Activated CD4-positive, alpha-beta T cell treated with anti-CD3 and anti-CD28 coated beads, Interleukin-2, amount 10 ng/mL, durations not matched to agents 24 days and 14 days (primary cell): ENCODE measurements at regions of chr16 and their contacts with region 1.

Region 1: DNA sequence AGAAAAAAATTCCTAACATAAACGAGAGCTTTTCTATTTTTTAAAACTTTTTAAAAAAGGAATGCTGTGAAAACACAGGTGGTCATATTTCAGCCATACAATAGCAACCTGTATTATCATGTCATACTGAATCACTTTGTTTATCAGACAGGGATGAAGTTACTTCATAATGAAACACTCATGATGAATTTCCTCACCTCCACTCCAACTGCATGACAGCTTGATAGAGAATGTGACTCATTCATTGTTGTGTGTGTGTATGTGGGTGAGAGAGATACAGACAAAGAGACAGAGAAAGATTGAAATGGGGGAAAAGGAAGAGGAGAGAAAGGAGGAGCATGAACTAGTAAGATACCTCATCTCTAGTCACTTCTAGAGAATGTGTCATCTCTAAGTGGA is 109.0 kb downstream of the SYCE1L start:
- DNase-seq: no peak
- H3K4me3 Mint-ChIP-seq: no peak overlapping the region
- H3K27ac Mint-ChIP-seq: peak overlapping the region; percentile 90
- H3K4me1 Mint-ChIP-seq: peaks cover 8% of the 10 kb centered on the region
- H3K27me3 Mint-ChIP-seq: no peaks in the 10 kb centered on the region

Region 2: GRCh38 chr16:77262971-77263370 is 45.2 kb before region 1 on chr16:
- intact Hi-C with region 1: no loop called
- DNase-seq: no peak
- H3K4me3 Mint-ChIP-seq: no peak overlapping the region
- H3K27ac Mint-ChIP-seq: no peak overlapping the region
- H3K4me1 Mint-ChIP-seq: no peaks in the 10 kb centered on the region
- H3K27me3 Mint-ChIP-seq: peaks cover 19% of the 10 kb centered on the region

Region 3: DNA sequence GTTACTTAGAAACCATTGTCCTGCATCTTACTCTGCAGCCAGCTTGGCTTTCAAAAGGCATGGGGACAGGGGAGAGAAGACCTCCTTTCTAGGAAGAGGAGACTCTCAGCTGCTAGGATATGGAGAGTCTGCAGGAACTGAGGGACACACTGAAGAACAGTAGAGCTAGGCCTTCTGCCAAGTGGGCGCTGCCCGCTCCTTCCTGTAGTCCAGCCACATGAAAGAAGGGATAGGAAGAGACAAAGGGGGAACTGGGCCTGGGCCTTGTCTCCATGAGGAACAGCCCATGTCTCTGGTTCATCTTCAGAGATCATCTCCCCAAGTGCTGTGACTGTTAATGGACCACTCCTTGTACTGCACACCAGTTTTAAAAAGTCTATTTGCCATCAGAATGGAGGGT is 30.6 kb before region 1 on chr16:
- intact Hi-C with region 1: no loop called
- DNase-seq: no peak
- H3K4me3 Mint-ChIP-seq: no peak overlapping the region
- H3K27ac Mint-ChIP-seq: no peak overlapping the region
- H3K4me1 Mint-ChIP-seq: no peaks in the 10 kb centered on the region
- H3K27me3 Mint-ChIP-seq: peaks cover 4% of the 10 kb centered on the region

Region 4: GRCh38 chr16:77330332-77331042 is 22.3 kb after region 1 on chr16:
- intact Hi-C with region 1: loop called (anchors 1 kb)
- DNase-seq: no peak
- H3K4me3 Mint-ChIP-seq: no peak overlapping the region
- H3K27ac Mint-ChIP-seq: peak overlapping the region; percentile 48
- H3K4me1 Mint-ChIP-seq: peaks cover 7% of the 10 kb centered on the region
- H3K27me3 Mint-ChIP-seq: no peaks in the 10 kb centered on the region

Region 5: GRCh38 chr16:77376358-77376757 is 68.2 kb after region 1 on chr16:
- intact Hi-C with region 1: no loop called
- DNase-seq: peak; percentile 64
- H3K4me3 Mint-ChIP-seq: no peak overlapping the region
- H3K27ac Mint-ChIP-seq: no peak overlapping the region
- H3K4me1 Mint-ChIP-seq: no peaks in the 10 kb centered on the region
- H3K27me3 Mint-ChIP-seq: peaks cover 4% of the 10 kb centered on the region

Region 6: DNA sequence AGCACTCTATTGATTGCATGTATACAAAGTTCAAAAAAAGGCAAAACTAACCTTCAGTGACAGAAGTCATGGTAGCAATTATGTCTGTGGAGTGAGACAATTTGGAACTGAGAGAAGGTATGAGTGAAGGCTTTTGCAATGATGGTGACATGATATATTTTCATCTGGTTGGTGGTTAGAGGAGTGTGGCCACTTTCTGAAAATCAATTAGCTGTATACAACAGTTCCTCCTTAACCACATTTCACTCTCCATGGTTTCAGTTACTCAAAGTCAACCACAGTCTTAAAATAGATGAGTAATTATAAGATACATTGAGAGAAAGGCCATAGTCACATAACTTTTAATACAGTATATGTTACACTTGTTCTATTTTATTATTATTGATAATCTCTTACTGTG is 100.4 kb after region 1 on chr16:
- intact Hi-C with region 1: loop called (anchors 1 kb)
- DNase-seq: no peak
- H3K4me3 Mint-ChIP-seq: no peak overlapping the region
- H3K27ac Mint-ChIP-seq: no peak overlapping the region
- H3K4me1 Mint-ChIP-seq: peaks cover 1% of the 10 kb centered on the region
- H3K27me3 Mint-ChIP-seq: peaks cover 5% of the 10 kb centered on the region